IMR-90 (cell line): ENCODE measurements at regions of chr17 and their contacts with region 1.

Region 1: GRCh38 chr17:72725433-72726068 is 366.9 kb downstream of the SLC39A11 start:
- DNase-seq: peak; percentile 66
- ATAC-seq: peak; percentile 84
- H3K4me3 ChIP-seq: no peak overlapping the region
- H3K27ac ChIP-seq: no peak overlapping the region
- H3K4me1 ChIP-seq: peaks cover 8% of the 10 kb centered on the region
- H3K27me3 ChIP-seq: no peaks in the 10 kb centered on the region
- CTCF ChIP-seq: peak; percentile 90
- POLR2A ChIP-seq: peak; percentile 42; the same call in 1 of the 2 replicates
- RAD21 ChIP-seq: peak; percentile 95

Region 2: DNA sequence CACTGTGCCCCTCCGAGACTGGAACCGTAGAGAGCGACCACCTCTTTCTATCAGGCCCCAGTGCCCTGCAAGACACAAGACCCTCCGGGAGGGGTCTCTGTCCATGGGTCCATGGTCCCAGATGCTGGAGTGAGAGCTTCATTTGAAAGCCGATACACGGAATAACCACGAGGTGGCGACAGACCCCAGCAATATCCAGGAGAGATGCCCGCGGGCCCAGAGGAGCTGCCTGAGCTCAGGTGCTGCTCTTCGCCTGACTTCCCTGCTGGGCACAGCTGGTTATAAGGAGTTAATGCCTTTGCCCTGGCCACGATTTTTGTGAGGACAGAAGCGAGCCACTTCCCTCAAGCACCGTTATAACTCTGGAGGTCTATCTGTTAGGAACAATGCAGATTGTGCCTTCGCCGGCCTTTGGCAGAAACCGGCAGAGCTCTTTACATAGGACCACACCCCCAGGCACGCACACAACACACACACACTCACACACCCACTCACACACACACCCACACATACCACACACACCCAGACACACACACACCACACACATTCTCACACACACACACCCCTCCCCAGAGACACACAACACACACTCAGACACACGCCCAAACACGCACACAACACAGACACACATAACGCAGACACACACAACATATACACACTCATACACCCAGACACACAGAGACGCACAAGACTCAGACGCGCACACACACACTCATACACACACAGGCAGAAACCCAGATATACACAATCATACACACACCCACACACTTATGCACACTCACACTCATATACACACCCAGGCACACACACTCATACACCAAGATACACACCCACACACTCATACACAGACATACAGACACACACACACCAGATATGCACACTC is 168.4 kb before region 1 on chr17:
- CTCF ChIA-PET with region 1: interaction called, 24 read pairs
- POLR2A ChIA-PET with region 1: no interaction called
- dilution Hi-C with region 1: no loop called
- in situ Hi-C with region 1: no loop called
- intact Hi-C with region 1: loop called (anchors 1 kb)
- DNase-seq: peak; percentile 57
- ATAC-seq: peak; percentile 80
- H3K4me3 ChIP-seq: no peak overlapping the region
- H3K27ac ChIP-seq: no peak overlapping the region
- H3K4me1 ChIP-seq: peaks cover 1% of the 10 kb centered on the region; the same call in 1 of the 2 replicates
- H3K27me3 ChIP-seq: no peaks in the 10 kb centered on the region
- CTCF ChIP-seq: peak; percentile 83
- POLR2A ChIP-seq: no peak
- RAD21 ChIP-seq: peak; percentile 90

Region 3: GRCh38 chr17:72985881-72986720 is 260.6 kb after region 1 on chr17:
- CTCF ChIA-PET with region 1: interaction called, 14 read pairs
- POLR2A ChIA-PET with region 1: no interaction called
- dilution Hi-C with region 1: no loop called
- in situ Hi-C with region 1: no loop called
- intact Hi-C with region 1: loop called (anchors 2 kb)
- DNase-seq: peak; percentile 80
- ATAC-seq: peak; percentile 80
- H3K4me3 ChIP-seq: no peak overlapping the region
- H3K27ac ChIP-seq: no peak overlapping the region
- H3K4me1 ChIP-seq: peaks cover 15% of the 10 kb centered on the region
- H3K27me3 ChIP-seq: no peaks in the 10 kb centered on the region
- CTCF ChIP-seq: peak; percentile 84
- POLR2A ChIP-seq: no peak
- RAD21 ChIP-seq: peak; percentile 85

Region 4: DNA sequence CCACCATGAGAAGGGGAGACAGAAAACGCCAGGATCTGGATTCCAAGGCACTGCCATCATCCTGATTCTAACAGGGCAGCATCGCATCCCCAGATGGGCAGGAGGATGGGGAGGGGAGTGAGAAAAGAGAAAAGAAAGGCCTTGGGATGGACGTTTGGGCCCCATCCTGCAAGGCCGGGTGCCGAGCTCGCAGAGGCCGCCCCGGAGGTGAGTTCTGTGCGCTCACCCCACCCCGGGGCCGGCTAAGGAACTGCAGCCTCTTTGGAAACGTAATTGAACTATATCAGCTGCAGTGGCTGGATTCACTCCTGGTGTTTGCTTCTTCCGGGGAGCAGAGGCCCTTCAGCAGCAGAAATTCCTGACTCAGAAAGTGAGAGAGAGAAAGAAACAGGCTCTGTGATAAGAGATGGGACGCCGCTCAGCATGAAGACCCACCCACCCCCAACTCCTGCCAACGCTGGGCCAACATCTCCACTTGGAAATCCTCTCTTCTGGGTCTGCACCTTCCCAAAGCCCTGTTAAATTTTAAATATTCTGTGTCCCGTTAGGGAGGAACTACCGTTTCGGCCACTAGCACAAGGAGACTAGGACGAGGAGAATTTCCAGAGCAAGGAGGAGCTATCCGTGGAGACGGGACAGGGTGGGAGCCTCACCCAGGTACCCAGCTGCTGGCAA is 430.8 kb after region 1 on chr17:
- CTCF ChIA-PET with region 1: interaction called, 4 read pairs
- POLR2A ChIA-PET with region 1: no interaction called
- dilution Hi-C with region 1: no loop called
- in situ Hi-C with region 1: loop called (anchors 10 kb)
- intact Hi-C with region 1: loop called (anchors 1 kb)
- DNase-seq: peak; percentile 68
- ATAC-seq: peak; percentile 100
- H3K4me3 ChIP-seq: no peak overlapping the region
- H3K27ac ChIP-seq: no peak overlapping the region
- H3K4me1 ChIP-seq: peaks cover 3% of the 10 kb centered on the region; the same call in 1 of the 2 replicates
- H3K27me3 ChIP-seq: peaks cover 18% of the 10 kb centered on the region
- CTCF ChIP-seq: peak; percentile 81
- POLR2A ChIP-seq: no peak
- RAD21 ChIP-seq: peak; percentile 79

Region 5: DNA sequence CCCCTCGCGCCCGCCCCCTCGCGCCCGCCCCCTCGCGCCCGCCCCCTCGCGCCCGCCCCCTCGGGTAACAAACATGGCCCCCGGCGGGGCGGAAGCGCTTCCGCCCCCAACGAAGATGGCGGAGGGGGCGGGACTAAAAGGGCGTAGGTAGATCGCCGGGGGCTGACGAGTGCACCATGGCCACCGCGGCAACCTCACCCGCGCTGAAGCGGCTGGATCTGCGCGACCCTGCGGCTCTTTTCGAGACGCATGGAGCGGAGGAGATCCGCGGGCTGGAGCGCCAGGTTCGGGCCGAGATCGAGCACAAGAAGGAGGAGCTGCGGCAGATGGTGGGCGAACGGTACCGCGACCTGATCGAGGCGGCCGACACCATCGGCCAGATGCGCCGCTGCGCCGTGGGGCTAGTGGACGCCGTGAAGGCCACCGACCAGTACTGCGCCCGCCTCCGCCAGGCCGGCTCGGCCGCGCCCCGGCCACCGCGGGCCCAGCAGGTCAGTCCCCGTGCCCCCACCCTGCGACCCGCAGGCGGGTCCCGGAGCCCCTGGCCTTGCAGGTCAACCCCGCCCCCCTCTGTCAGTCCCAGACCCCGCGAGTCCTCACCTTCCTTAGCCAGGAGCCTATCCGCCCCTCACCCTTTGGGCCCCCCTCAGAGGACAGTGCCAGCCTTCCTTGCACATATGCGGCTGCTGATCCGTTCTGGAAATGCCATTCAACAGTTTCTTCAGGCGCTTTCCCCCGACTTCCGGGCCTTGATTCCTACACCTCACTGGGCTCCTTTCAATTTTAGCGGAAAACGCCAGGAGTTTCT is 467.5 kb after region 1 on chr17 and contains the start of gene COG1:
- CTCF ChIA-PET with region 1: interaction called, 18 read pairs
- POLR2A ChIA-PET with region 1: no interaction called
- dilution Hi-C with region 1: no loop called
- in situ Hi-C with region 1: loop called (anchors 5 kb)
- intact Hi-C with region 1: loop called (anchors 1 kb)
- DNase-seq: peak; percentile 84
- ATAC-seq: peak; percentile 89
- H3K4me3 ChIP-seq: peak within 1 kb of the TSS; percentile 99
- H3K27ac ChIP-seq: peak within 1 kb of the TSS; percentile 93
- H3K4me1 ChIP-seq: peaks cover 5% of the 10 kb centered on the region
- H3K27me3 ChIP-seq: no peaks in the 10 kb centered on the region
- CTCF ChIP-seq: 0 out of 2 replicates have a peak, but pooled peaks have one; percentile 4
- POLR2A ChIP-seq: peak; percentile 88
- RAD21 ChIP-seq: no peak
- total RNA-seq, gene COG1: 14.4 and 18.3 TPM in 2 replicates

Region 6: GRCh38 chr17:73247726-73248125 is 522.2 kb after region 1 on chr17:
- CTCF ChIA-PET with region 1: interaction called, 7 read pairs
- POLR2A ChIA-PET with region 1: no interaction called
- dilution Hi-C with region 1: no loop called
- in situ Hi-C with region 1: loop called (anchors 5 kb)
- intact Hi-C with region 1: loop called (anchors 5 kb)
- DNase-seq: peak; percentile 16
- ATAC-seq: no peak
- H3K4me3 ChIP-seq: no peak overlapping the region
- H3K27ac ChIP-seq: no peak overlapping the region
- H3K4me1 ChIP-seq: no peaks in the 10 kb centered on the region
- H3K27me3 ChIP-seq: no peaks in the 10 kb centered on the region
- CTCF ChIP-seq: peak; percentile 27; the same call in 1 of the 2 replicates
- POLR2A ChIP-seq: no peak
- RAD21 ChIP-seq: peak; percentile 21; the same call in 1 of the 2 replicates

Region 7: GRCh38 chr17:74176546-74177001 is 1451.0 kb after region 1 on chr17:
- CTCF ChIA-PET with region 1: no interaction called
- POLR2A ChIA-PET with region 1: no interaction called
- dilution Hi-C with region 1: no loop called
- in situ Hi-C with region 1: no loop called
- intact Hi-C with region 1: loop called (anchors 10 kb)
- DNase-seq: peak; percentile 48
- ATAC-seq: peak; percentile 97
- H3K4me3 ChIP-seq: no peak overlapping the region
- H3K27ac ChIP-seq: no peak overlapping the region
- H3K4me1 ChIP-seq: no peaks in the 10 kb centered on the region
- H3K27me3 ChIP-seq: no peaks in the 10 kb centered on the region; the same call in 1 of the 2 replicates
- CTCF ChIP-seq: peak; percentile 84
- POLR2A ChIP-seq: no peak
- RAD21 ChIP-seq: peak; percentile 84